ENCODE measurements at regions of chrX and their contacts with region 1.

Region 1: DNA sequence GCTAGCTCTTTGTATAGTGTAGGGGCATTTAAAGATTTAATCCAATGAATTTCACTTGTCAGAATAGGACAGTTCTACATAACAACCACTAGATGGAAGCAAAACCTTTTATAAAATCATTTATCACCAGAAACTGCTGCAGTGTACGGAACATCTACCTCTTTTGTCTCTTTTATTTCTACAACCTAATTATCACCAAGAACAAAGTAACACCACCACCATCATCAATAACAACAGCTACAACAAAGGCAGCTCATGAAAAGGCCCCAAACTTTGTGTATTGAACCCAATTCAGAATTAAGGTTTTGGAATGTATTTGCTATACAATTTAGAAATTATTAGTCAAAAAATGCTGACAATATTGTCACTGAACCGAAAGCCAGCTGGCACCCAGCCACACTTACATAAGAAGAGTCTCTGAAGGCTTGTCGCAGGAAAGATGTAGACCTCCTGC is 260.9 kb upstream of the RPS6KA3 start:
- DNase-seq: peak; percentile 25
- ATAC-seq: peak in 1 of 2 donors; percentile 54

Region 2: GRCh38 chrX:21479695-21480270 is 952.2 kb after region 1 on chrX:
- intact Hi-C with region 1: loop called in 1 of 2 experiments (anchors 5 kb)
- DNase-seq: no peak
- ATAC-seq: peak; percentile 37 to 53

Region 3: GRCh38 chrX:21725496-21725895 is 1197.9 kb after region 1 on chrX:
- intact Hi-C with region 1: loop called in 1 of 2 experiments (anchors 5 kb)
- DNase-seq: no peak
- ATAC-seq: peak in 1 of 2 donors; percentile 66

Region 4: GRCh38 chrX:21745756-21746155 is 1218.2 kb after region 1 on chrX:
- intact Hi-C with region 1: loop called in 1 of 2 experiments (anchors 5 kb)
- DNase-seq: no peak
- ATAC-seq: no peak

Region 5: DNA sequence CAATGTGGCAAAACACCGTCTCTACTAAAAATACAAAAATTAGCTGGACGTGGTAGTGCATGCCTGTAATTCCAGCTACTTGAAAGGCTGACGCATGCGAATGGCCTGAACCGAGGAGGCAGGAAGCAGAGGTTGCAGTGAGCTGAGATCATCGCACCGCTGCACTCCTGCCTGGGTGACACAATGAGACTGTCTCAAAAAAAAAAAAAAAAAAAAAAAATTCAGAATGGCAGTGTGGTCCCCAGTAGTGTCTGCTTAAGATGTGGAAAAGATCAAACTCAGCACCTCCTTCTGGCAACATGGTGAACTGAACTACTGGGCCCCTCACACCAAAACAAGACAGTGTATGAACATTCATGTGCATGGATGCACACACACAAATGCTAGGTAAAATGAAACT is 1445.1 kb after region 1 on chrX:
- intact Hi-C with region 1: loop called in 1 of 2 experiments (anchors 10 kb)
- DNase-seq: no peak
- ATAC-seq: peak; percentile 63 to 78

Measured in left cardiac atrium (tissue), 4 donors.